CD14-positive monocyte (primary cell): ENCODE measurements at regions of chr1 and their contacts with region 1.

Region 1: GRCh38 chr1:229507951-229508822 is at the start of gene NUP133:
- DNase-seq: peak; percentile 97 to 98 (median 98)
- H3K4me3 ChIP-seq: peak within 1 kb of the TSS; percentile 63 to 99 (median 80)
- H3K4me3 Mint-ChIP-seq: peak within 1 kb of the TSS; percentile 81 to 92
- H3K27ac ChIP-seq: peak within 1 kb of the TSS; percentile 93 to 99
- H3K27ac Mint-ChIP-seq: peak within 1 kb of the TSS; percentile 96 to 99 (median 99)
- H3K4me1 ChIP-seq: peaks cover 14 to 20% of the 10 kb centered on the region in 2 donors
- H3K4me1 Mint-ChIP-seq: peaks cover 21% of the 10 kb centered on the region
- H3K27me3 ChIP-seq: no peaks in the 10 kb centered on the region
- H3K27me3 Mint-ChIP-seq: peaks cover 0 to 3% (median 0%) of the 10 kb centered on the region in 3 donors
- CTCF ChIP-seq: no peak
- polyA plus RNA-seq, gene NUP133: 9.0 to 12.8 (median 12.4) TPM

Region 2: GRCh38 chr1:229270547-229271447 is 237.4 kb before region 1 on chr1 and contains the start of gene RAB4A:
- intact Hi-C with region 1: loop called in 1 of 2 experiments (anchors 5 kb)
- DNase-seq: peak; percentile 83 to 90 (median 86)
- H3K4me3 ChIP-seq: peak within 1 kb of the TSS; percentile 67 to 93 (median 77)
- H3K4me3 Mint-ChIP-seq: peak within 1 kb of the TSS; percentile 93 to 95
- H3K27ac ChIP-seq: peak within 1 kb of the TSS; percentile 16 to 77
- H3K27ac Mint-ChIP-seq: peak within 1 kb of the TSS; percentile 77 to 91 (median 85)
- H3K4me1 ChIP-seq: peaks cover 46 to 50% of the 10 kb centered on the region in 2 donors
- H3K4me1 Mint-ChIP-seq: peaks cover 54% of the 10 kb centered on the region
- H3K27me3 ChIP-seq: no peaks in the 10 kb centered on the region
- H3K27me3 Mint-ChIP-seq: no peaks in the 10 kb centered on the region
- CTCF ChIP-seq: no peak
- polyA plus RNA-seq, gene RAB4A: 22.3 to 34.8 (median 34.5) TPM

Region 3: DNA sequence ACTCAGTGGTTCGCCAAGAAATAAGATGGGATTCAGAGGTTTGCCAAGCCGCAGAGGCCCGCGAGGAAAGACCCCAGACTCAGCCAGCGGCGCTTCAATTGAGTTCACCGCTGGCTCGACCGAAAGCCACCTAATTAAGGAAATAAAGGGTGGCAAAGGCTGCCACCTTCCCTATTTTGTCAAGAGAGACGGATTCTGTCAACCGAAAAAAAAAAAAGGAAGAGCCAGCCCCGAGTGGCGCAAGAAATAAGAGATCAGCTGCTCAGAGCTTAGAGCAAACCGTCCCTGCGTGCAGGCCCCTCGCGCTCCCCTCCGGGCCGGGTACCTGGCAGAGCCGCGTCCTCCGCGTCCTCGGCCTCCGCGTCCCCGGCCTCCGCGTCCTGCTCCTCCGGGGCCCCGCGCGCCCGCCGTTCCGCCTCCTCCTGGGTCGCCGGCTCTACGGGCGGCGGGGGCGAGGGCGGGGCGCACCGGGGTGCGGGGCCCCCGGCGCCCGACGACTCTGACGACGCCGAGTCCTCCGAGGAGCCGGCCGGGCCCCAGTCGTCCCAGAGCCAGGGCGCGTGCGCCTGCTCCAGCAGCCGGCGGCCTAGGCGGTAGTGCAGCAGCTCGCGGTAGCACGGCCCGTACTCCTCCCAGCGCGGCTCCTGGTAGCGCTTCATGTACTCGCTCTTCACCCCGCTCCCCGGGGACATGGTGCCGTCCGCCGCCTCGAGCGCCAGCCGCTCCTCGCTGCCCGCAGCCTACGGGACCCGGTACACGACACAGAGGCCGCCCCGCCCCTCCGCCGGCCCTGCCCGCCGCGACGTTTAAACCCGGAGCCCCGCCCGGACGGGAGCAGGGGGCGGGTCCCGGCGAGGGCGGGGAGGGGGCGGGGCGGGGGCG is 166.2 kb before region 1 on chr1:
- intact Hi-C with region 1: loop called in 1 of 2 experiments (anchors 2 kb)
- DNase-seq: peak; percentile 80 to 89 (median 83)
- H3K4me3 ChIP-seq: peak overlapping the region; percentile 47 to 93 (median 84)
- H3K4me3 Mint-ChIP-seq: peak overlapping the region; percentile 91 to 93
- H3K27ac ChIP-seq: peak overlapping the region; percentile 69 to 79
- H3K27ac Mint-ChIP-seq: peak overlapping the region; percentile 87 to 97 (median 94)
- H3K4me1 ChIP-seq: peaks cover 38 to 56% of the 10 kb centered on the region in 2 donors
- H3K4me1 Mint-ChIP-seq: peaks cover 54% of the 10 kb centered on the region
- H3K27me3 ChIP-seq: no peaks in the 10 kb centered on the region
- H3K27me3 Mint-ChIP-seq: peaks cover 4 to 11% (median 8%) of the 10 kb centered on the region in 3 donors
- CTCF ChIP-seq: no peak

Region 4: GRCh38 chr1:229558571-229559335 is 50.6 kb after region 1 on chr1 and contains the start of gene ABCB10:
- intact Hi-C with region 1: loop called in 1 of 2 experiments (anchors 10 kb)
- DNase-seq: peak; percentile 94 to 97 (median 94)
- H3K4me3 ChIP-seq: peak within 1 kb of the TSS; percentile 65 to 95 (median 89)
- H3K4me3 Mint-ChIP-seq: peak within 1 kb of the TSS; percentile 89 to 94
- H3K27ac ChIP-seq: peak within 1 kb of the TSS; percentile 54 to 80
- H3K27ac Mint-ChIP-seq: peak within 1 kb of the TSS; percentile 74 to 89 (median 79)
- H3K4me1 ChIP-seq: peaks cover 26 to 32% of the 10 kb centered on the region in 2 donors
- H3K4me1 Mint-ChIP-seq: peaks cover 41% of the 10 kb centered on the region
- H3K27me3 ChIP-seq: no peaks in the 10 kb centered on the region
- H3K27me3 Mint-ChIP-seq: peaks cover 0 to 2% (median 0%) of the 10 kb centered on the region in 3 donors
- CTCF ChIP-seq: peak; percentile 69
- polyA plus RNA-seq, gene ABCB10: 5.4 to 12.9 (median 11.4) TPM

Region 5: GRCh38 chr1:229643996-229644745 is 136.0 kb after region 1 on chr1:
- intact Hi-C with region 1: no loop called
- DNase-seq: peak in 2 of 3 donors; percentile 24 to 42
- H3K4me3 ChIP-seq: no peak overlapping the region
- H3K4me3 Mint-ChIP-seq: no peak overlapping the region
- H3K27ac ChIP-seq: peak overlapping the region in 1 of 2 donors; percentile 33
- H3K27ac Mint-ChIP-seq: peak overlapping the region in 6 of 7 donors; percentile 0 to 81 (median 40)
- H3K4me1 ChIP-seq: peaks cover 9 to 11% of the 10 kb centered on the region in 2 donors
- H3K4me1 Mint-ChIP-seq: peaks cover 12% of the 10 kb centered on the region
- H3K27me3 ChIP-seq: no peaks in the 10 kb centered on the region
- H3K27me3 Mint-ChIP-seq: peaks cover 0 to 5% (median 0%) of the 10 kb centered on the region in 3 donors
- CTCF ChIP-seq: no peak